SK-N-SH (cell line): ENCODE measurements at regions of chr1 and their contacts with region 1.

Region 1: DNA sequence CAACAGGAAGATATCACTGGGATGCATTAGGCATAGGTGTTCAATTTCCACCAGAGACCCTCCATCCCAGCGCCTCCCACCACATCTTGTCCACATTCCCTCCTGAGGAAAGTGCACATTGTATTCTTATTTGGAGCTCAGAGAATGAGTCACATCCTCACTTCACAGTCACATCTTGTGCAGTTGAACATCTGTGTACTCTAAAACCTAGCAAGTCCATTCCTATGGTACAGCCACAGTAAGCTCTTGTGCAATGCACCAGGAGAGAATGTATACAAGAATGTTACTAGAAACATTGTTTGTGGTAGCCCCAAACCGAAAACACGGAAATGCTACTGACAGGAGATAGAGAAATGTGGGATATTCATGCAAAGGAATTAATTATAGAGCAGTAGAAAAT is 1.6 kb upstream of the KDF1 start:
- DNase-seq: no peak
- H3K4me3 ChIP-seq: no peak overlapping the region
- H3K27ac ChIP-seq: no peak overlapping the region
- H3K4me1 ChIP-seq: peaks cover 3 to 7% of the 10 kb centered on the region in 2 experiments; a peak in 1 of 4 replicates
- H3K27me3 ChIP-seq: peaks cover 41% of the 10 kb centered on the region
- CTCF ChIP-seq: no peak
- EP300 ChIP-seq: no peak
- RAD21 ChIP-seq: no peak

Region 2: DNA sequence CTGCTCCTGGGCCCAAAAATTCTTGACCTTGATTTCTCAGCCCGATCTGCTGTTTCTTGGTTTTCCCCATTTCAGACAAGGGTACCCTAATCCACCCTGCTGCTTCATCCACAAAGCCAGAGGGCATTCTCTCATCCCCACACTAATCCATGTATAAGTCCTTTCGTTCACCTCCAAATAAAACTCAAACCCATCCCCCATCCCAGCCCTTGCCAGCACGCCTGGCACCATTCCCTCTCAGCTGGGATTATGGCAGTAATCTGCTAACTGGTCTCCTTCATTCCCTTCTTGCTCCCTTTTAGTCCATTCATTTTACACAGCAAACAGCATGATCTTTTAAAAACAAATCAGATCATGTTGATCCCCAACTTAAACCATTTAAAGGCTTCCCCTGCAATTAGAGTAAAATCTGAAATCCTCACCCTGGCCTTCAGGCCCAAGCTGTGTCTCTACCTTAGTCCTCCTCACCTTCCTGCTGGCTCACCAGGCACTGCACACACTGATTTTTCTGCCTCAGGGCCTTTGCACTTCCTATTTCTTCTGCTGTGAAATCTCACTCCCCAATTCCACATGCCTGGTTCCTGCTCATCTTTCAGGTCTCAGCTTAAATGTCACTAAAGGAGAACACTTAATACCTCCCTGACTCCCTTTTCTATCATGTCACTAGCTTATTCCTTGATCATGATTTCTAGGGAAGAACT is 19.5 kb after region 1 on chr1:
- CTCF ChIA-PET with region 1: interaction called, 14 read pairs
- POLR2A ChIA-PET with region 1: no interaction called
- DNase-seq: no peak
- H3K4me3 ChIP-seq: no peak overlapping the region
- H3K27ac ChIP-seq: no peak overlapping the region
- H3K4me1 ChIP-seq: no peaks in the 10 kb centered on the region
- H3K27me3 ChIP-seq: no peaks in the 10 kb centered on the region; the same call in 1 of the 2 replicates
- CTCF ChIP-seq: no peak
- EP300 ChIP-seq: no peak
- RAD21 ChIP-seq: no peak

Region 3: DNA sequence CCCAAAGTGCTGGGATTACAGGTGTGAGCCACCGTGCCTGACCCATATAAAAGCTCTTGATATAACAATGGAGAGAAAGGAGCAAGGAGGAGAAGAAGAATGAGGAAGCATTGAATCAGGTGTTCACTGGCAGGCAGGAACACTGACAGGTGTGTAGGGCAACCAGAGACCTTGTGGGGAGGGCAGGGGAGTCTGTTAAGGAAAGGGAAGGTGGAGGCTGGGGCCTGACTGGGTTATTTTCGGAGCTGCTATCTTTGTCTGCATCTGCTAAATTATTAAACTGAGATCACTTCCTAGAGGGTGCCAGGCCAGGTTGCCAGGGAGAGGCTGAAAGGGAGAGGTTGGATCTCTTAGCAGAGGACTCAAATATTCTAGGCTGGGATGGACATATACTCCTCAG is 24.8 kb after region 1 on chr1:
- CTCF ChIA-PET with region 1: interaction called, 14 read pairs
- POLR2A ChIA-PET with region 1: no interaction called
- DNase-seq: no peak
- H3K4me3 ChIP-seq: no peak overlapping the region
- H3K27ac ChIP-seq: no peak overlapping the region
- H3K4me1 ChIP-seq: peaks cover 0 to 5% of the 10 kb centered on the region in 2 experiments; a peak in 1 of 4 replicates
- H3K27me3 ChIP-seq: no peaks in the 10 kb centered on the region; the same call in 1 of the 2 replicates
- CTCF ChIP-seq: no peak
- EP300 ChIP-seq: no peak
- RAD21 ChIP-seq: no peak

Region 4: DNA sequence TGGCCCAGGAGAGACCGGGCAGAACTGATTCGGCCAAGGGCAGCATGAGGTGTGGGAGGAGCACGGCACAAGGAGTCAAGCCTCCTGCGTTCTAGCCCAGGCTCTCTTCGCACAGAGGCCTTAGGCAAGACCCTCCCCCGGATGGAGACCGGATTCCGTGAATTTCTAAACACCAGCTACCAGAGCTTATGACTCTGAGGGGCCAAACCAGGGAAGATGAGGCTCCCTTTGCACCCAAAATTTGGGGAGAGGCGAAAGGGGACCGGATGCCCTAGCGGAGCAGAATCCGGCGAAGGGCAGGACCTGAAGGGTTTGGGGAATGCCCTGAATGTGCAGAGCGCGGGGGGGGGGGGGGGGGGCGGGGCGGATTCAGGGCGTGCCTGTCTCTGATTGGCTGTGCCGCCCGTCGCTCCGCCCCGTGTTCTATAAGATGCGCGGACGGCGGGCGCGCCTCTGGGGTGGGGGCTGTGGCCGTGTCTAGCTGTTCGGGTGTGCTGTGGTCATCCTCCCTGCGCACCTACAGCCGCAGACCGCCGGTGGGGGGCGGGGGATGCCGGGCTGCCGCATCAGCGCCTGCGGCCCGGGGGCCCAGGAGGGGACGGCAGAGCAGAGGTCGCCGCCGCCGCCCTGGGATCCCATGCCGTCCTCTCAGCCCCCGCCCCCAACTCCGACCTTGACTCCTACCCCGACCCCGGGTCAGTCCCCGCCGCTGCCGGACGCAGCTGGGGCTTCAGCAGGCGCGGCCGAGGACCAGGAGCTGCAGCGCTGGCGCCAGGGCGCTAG is 31.6 kb after region 1 on chr1 and contains the start of gene TRNP1:
- CTCF ChIA-PET with region 1: interaction called, 28 read pairs
- POLR2A ChIA-PET with region 1: no interaction called
- DNase-seq: peak; percentile 97
- H3K4me3 ChIP-seq: peak within 1 kb of the TSS; percentile 48 to 71
- H3K27ac ChIP-seq: no peak within 1 kb of the TSS
- H3K4me1 ChIP-seq: peaks cover 9 to 12% of the 10 kb centered on the region in 2 experiments; a peak in 2 of 4 replicates
- H3K27me3 ChIP-seq: no peaks in the 10 kb centered on the region
- CTCF ChIP-seq: no peak
- EP300 ChIP-seq: no peak
- RAD21 ChIP-seq: no peak
- polyA plus RNA-seq, gene TRNP1: 8.8 and 11.6 TPM in 2 replicates